SK-N-SH (cell line): ENCODE measurements at regions of chr3 and their contacts with region 1.

Region 1: GRCh38 chr3:128680602-128681368 is 30.2 kb upstream of the RPN1 start:
- DNase-seq: peak; percentile 98
- H3K4me3 ChIP-seq: peak overlapping the region; percentile 57 to 58
- H3K27ac ChIP-seq: peak overlapping the region; percentile 84 to 99
- H3K4me1 ChIP-seq: peaks cover 5% of the 10 kb centered on the region in 2 experiments; a peak in 2 of 4 replicates
- H3K27me3 ChIP-seq: no peaks in the 10 kb centered on the region
- CTCF ChIP-seq: peak; percentile 94
- EP300 ChIP-seq: no peak; a peak in 1 of 4 replicates
- RAD21 ChIP-seq: peak; percentile 80

Region 2: GRCh38 chr3:128343287-128344051 is 337.3 kb before region 1 on chr3:
- CTCF ChIA-PET with region 1: no interaction called
- POLR2A ChIA-PET with region 1: no interaction called
- DNase-seq: peak; percentile 63
- H3K4me3 ChIP-seq: no peak overlapping the region
- H3K27ac ChIP-seq: peak overlapping the region in 1 of 2 experiments; percentile 76; a peak in 2 of 4 replicates
- H3K4me1 ChIP-seq: peaks cover 10 to 21% of the 10 kb centered on the region in 2 experiments; a peak in 3 of 4 replicates
- H3K27me3 ChIP-seq: no peaks in the 10 kb centered on the region
- CTCF ChIP-seq: no peak
- EP300 ChIP-seq: no peak
- RAD21 ChIP-seq: no peak

Region 3: GRCh38 chr3:128617557-128618397 is 63.0 kb before region 1 on chr3:
- CTCF ChIA-PET with region 1: interaction called, 12 read pairs
- POLR2A ChIA-PET with region 1: no interaction called
- DNase-seq: peak; percentile 100
- H3K4me3 ChIP-seq: peak overlapping the region; percentile 78 to 88
- H3K27ac ChIP-seq: peak overlapping the region; percentile 79 to 89; a peak in 3 of 4 replicates
- H3K4me1 ChIP-seq: peaks cover 15% of the 10 kb centered on the region in 2 experiments
- H3K27me3 ChIP-seq: no peaks in the 10 kb centered on the region
- CTCF ChIP-seq: peak; percentile 92
- EP300 ChIP-seq: no peak
- RAD21 ChIP-seq: peak; percentile 76

Region 4: DNA sequence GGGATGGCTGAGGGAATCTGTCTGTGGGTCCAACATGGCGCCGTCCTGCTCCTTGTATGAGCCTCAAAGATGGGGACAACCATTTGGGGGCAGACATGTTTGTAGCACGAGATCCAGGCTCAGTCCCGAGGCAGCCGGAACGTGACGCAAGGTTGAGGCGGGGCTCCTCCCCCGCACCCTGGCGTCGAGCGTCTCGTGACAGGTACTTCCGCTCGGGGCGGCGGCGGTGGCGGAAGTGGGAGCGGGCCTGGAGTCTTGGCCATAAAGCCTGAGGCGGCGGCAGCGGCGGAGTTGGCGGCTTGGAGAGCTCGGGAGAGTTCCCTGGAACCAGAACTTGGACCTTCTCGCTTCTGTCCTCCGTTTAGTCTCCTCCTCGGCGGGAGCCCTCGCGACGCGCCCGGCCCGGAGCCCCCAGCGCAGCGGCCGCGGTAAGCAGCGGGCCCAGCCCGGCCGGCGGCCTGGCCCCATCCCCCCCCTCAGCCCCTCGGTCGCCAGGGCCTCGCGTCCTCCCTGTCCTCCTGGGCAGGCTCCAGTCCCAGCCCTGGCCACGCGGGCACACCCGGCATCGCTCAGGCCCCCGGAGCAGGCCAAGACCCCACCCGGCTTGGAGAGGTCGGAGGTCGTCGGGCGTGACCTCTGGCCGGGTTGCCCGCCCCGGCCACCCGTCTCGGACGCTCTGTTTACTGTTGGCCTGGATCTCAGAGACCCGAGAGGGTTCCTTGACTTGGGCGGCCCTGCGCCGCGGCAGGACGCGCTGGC is 45.3 kb after region 1 on chr3 and contains the start of gene RAB7A:
- CTCF ChIA-PET with region 1: interaction called, 32 read pairs
- POLR2A ChIA-PET with region 1: interaction called, 11 read pairs
- DNase-seq: peak; percentile 98
- H3K4me3 ChIP-seq: peak within 1 kb of the TSS; percentile 95 to 97
- H3K27ac ChIP-seq: peak within 1 kb of the TSS; percentile 82 to 90
- H3K4me1 ChIP-seq: peaks cover 5 to 9% of the 10 kb centered on the region in 2 experiments
- H3K27me3 ChIP-seq: no peaks in the 10 kb centered on the region
- CTCF ChIP-seq: no peak
- EP300 ChIP-seq: no peak
- RAD21 ChIP-seq: no peak
- polyA plus RNA-seq, gene RAB7A: 271 and 329 TPM in 2 replicates

Region 5: DNA sequence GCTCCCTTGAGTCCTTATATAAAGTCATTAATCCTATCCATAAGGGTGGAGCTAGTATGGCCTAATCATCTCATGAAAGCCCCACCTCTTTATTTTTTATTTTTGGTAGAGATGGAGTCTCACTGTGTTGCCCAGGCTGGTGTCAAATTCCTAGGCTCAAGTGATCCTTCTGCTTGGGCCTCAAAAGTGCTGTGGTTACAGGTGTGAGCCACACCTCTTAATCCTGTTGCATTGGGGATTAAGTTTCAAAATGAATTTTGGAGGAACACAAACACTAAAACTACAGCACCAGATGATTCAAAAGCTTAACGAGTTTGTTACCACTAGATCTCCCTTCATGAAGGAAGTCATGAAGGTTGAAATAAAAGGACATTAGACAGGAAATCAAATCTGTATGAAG is 72.9 kb after region 1 on chr3:
- CTCF ChIA-PET with region 1: interaction called, 18 read pairs
- POLR2A ChIA-PET with region 1: no interaction called
- DNase-seq: no peak
- H3K4me3 ChIP-seq: no peak overlapping the region
- H3K27ac ChIP-seq: no peak overlapping the region
- H3K4me1 ChIP-seq: no peaks in the 10 kb centered on the region
- H3K27me3 ChIP-seq: no peaks in the 10 kb centered on the region
- CTCF ChIP-seq: no peak
- EP300 ChIP-seq: no peak
- RAD21 ChIP-seq: no peak

Region 6: GRCh38 chr3:128794770-128795649 is 114.2 kb after region 1 on chr3:
- CTCF ChIA-PET with region 1: interaction called, 112 read pairs
- POLR2A ChIA-PET with region 1: interaction called, 18 read pairs
- DNase-seq: peak; percentile 81
- H3K4me3 ChIP-seq: no peak overlapping the region; a peak in 1 of 4 replicates
- H3K27ac ChIP-seq: peak overlapping the region; percentile 20 to 69; a peak in 3 of 4 replicates
- H3K4me1 ChIP-seq: peaks cover 5 to 13% of the 10 kb centered on the region in 2 experiments; a peak in 2 of 4 replicates
- H3K27me3 ChIP-seq: no peaks in the 10 kb centered on the region
- CTCF ChIP-seq: peak; percentile 82
- EP300 ChIP-seq: no peak
- RAD21 ChIP-seq: peak; percentile 78

Region 7: GRCh38 chr3:128845778-128846485 is 165.1 kb after region 1 on chr3:
- CTCF ChIA-PET with region 1: interaction called, 28 read pairs
- POLR2A ChIA-PET with region 1: no interaction called
- DNase-seq: peak; percentile 94
- H3K4me3 ChIP-seq: peak overlapping the region; percentile 52 to 58
- H3K27ac ChIP-seq: peak overlapping the region in 1 of 2 experiments; percentile 53; a peak in 2 of 4 replicates
- H3K4me1 ChIP-seq: peaks cover 5 to 30% of the 10 kb centered on the region in 2 experiments; a peak in 1 of 4 replicates
- H3K27me3 ChIP-seq: no peaks in the 10 kb centered on the region
- CTCF ChIP-seq: peak; percentile 67
- EP300 ChIP-seq: no peak
- RAD21 ChIP-seq: peak; percentile 61

Region 8: DNA sequence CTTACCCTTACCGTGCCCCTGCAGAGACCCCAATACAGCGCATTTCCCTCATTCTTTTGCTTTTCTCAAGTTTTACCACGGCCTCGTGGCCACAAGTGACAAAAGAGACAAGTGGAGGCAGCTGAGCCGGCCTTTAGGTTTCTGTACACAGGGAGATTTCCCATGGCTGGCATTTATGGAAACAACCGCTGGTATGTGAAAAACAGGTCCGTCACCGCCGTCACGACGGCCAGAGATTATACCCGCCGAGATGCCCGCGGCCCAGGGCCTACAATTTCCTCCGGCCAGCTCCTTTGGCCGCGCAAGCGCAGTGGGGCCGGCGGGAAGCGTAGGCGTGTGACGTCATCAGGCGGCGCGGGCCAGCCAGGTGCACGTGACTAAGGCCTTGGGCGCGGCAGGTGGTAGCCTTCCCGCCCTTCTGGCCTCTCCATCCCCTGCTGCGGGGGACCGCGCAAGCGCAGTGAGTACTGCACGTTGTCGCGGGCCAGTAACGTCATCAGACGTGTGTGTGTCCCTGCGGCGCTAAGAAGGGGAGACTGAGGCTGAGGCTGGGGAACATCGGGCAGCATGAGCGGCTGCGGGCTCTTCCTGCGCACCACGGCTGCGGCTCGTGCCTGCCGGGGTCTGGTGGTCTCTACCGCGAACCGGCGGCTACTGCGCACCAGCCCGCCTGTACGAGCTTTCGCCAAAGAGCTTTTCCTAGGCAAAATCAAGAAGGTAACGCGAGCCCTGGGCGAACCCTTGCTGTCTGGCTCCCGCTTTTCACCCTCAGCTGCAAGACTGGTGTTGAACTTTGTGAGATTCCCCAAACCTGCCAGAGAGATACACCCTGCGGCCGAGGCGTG is 198.6 kb after region 1 on chr3 and contains the start of gene ACAD9:
- CTCF ChIA-PET with region 1: interaction called, 18 read pairs
- POLR2A ChIA-PET with region 1: interaction called, 5 read pairs
- DNase-seq: peak; percentile 99
- H3K4me3 ChIP-seq: peak within 1 kb of the TSS; percentile 81 to 95
- H3K27ac ChIP-seq: peak within 1 kb of the TSS; percentile 92 to 93
- H3K4me1 ChIP-seq: peaks cover 0 to 24% of the 10 kb centered on the region in 2 experiments; a peak in 2 of 4 replicates
- H3K27me3 ChIP-seq: no peaks in the 10 kb centered on the region
- CTCF ChIP-seq: no peak
- EP300 ChIP-seq: peak in 1 of 2 experiments; percentile 35; a peak in 1 of 4 replicates
- RAD21 ChIP-seq: no peak; the same call in 1 of the 2 replicates
- polyA plus RNA-seq, gene ACAD9: 38.2 and 41.9 TPM in 2 replicates

Region 9: GRCh38 chr3:129777806-129778205 is 1097.0 kb after region 1 on chr3:
- CTCF ChIA-PET with region 1: no interaction called
- POLR2A ChIA-PET with region 1: no interaction called
- DNase-seq: no peak
- H3K4me3 ChIP-seq: no peak overlapping the region
- H3K27ac ChIP-seq: no peak overlapping the region
- H3K4me1 ChIP-seq: no peaks in the 10 kb centered on the region
- H3K27me3 ChIP-seq: no peaks in the 10 kb centered on the region
- CTCF ChIP-seq: no peak
- EP300 ChIP-seq: no peak
- RAD21 ChIP-seq: no peak